Testis (tissue), 5 donors: ENCODE measurements at regions of chr7 and their contacts with region 1.

Region 1: GRCh38 chr7:95608359-95609173 is 12.2 kb upstream of the PDK4 start:
- DNase-seq: peak; percentile 88
- H3K4me3 ChIP-seq: no peak overlapping the region
- H3K27ac ChIP-seq: peak overlapping the region; percentile 47 to 85
- H3K4me1 ChIP-seq: peaks cover 33% of the 10 kb centered on the region
- H3K27me3 ChIP-seq: no peaks in the 10 kb centered on the region
- CTCF ChIP-seq: no peak
- POLR2A ChIP-seq: no peak

Region 2: DNA sequence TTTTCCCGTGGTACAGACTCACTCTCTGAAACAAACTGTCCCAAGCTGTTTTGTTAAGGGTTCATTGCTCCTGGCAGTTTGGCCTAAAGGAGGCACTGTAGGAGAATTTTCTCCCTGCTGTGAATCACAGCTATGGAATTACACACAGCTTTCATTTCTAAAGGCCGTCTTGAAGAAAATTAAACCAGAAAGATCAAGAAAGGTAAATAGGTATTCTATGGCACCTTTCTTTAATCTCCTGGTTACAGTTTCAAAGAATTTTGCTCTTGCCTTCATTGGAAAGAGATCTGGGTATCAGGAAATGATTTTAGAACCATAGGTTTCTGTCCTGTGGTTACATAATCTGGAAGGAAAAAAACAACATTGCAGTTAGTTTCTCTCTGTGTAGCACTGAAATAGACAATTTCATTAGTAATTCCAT is 63.5 kb before region 1 on chr7:
- intact Hi-C with region 1: loop called (anchors 10 kb)
- DNase-seq: peak; percentile 62
- H3K4me3 ChIP-seq: peak overlapping the region in 1 of 2 donors; percentile 7
- H3K27ac ChIP-seq: peak overlapping the region; percentile 73 to 94
- H3K4me1 ChIP-seq: peaks cover 24% of the 10 kb centered on the region
- H3K27me3 ChIP-seq: no peaks in the 10 kb centered on the region
- CTCF ChIP-seq: peak; percentile 63 to 74 (median 70)
- POLR2A ChIP-seq: no peak

Region 3: GRCh38 chr7:96388620-96389383 is 780.2 kb after region 1 on chr7:
- intact Hi-C with region 1: no loop called
- DNase-seq: no peak
- H3K4me3 ChIP-seq: no peak overlapping the region
- H3K27ac ChIP-seq: no peak overlapping the region
- H3K4me1 ChIP-seq: peaks cover 5% of the 10 kb centered on the region
- H3K27me3 ChIP-seq: no peaks in the 10 kb centered on the region
- CTCF ChIP-seq: no peak
- POLR2A ChIP-seq: no peak